Activated T-helper 2 cell treated with anti-CD3 and anti-CD28 coated beads, Interferon-gamma antibody, Interleukin-2, Interleukin-4, amounts not matched to agents 10 μg/mL and 5 μg/mL and 100 μg/mL, durations not matched to agents 14 hours and 24 hours and 36 hours (primary cell): ENCODE measurements at regions of chr12 and their contacts with region 1.

Region 1: GRCh38 chr12:95072900-95073697 is at the start of gene NR2C1:
- DNase-seq: peak; percentile 90
- H3K4me3 Mint-ChIP-seq: peak within 1 kb of the TSS; percentile 91
- H3K27ac Mint-ChIP-seq: peak within 1 kb of the TSS; percentile 85
- H3K4me1 Mint-ChIP-seq: peaks cover 13% of the 10 kb centered on the region
- H3K27me3 Mint-ChIP-seq: peaks cover 5% of the 10 kb centered on the region
- total RNA-seq, gene NR2C1: 28.5 and 30.0 TPM in 2 replicates

Region 2: DNA sequence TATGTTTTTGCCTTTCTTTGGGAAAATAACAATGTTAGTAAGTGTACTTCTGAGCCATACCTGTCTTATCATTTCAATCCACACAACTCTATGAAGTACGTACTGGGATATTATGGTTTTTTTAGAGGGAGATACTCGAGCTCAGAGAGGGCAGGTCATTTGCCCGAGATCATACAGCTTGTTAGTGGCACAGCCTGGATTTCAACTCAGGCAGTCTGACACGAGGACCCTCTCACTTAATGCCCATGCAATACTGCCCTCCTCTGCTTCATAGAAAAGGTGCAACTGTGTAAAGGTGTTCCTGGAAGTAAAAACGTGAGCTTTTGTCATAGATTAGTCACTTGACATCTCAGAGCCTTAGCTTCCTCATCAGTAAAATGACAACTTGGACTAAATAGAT is 197.6 kb before region 1 on chr12:
- intact Hi-C with region 1: loop called (anchors 10 kb)
- DNase-seq: no peak
- H3K4me3 Mint-ChIP-seq: no peak overlapping the region
- H3K27ac Mint-ChIP-seq: no peak overlapping the region
- H3K4me1 Mint-ChIP-seq: peaks cover 2% of the 10 kb centered on the region
- H3K27me3 Mint-ChIP-seq: peaks cover 45% of the 10 kb centered on the region

Region 3: GRCh38 chr12:95003213-95003920 is 69.7 kb before region 1 on chr12 and contains the start of gene NDUFA12:
- intact Hi-C with region 1: loop called (anchors 2 kb)
- DNase-seq: peak; percentile 92
- H3K4me3 Mint-ChIP-seq: peak within 1 kb of the TSS; percentile 90
- H3K27ac Mint-ChIP-seq: peak within 1 kb of the TSS; percentile 84
- H3K4me1 Mint-ChIP-seq: peaks cover 27% of the 10 kb centered on the region
- H3K27me3 Mint-ChIP-seq: no peaks in the 10 kb centered on the region
- total RNA-seq, gene NDUFA12: 117 and 118 TPM in 2 replicates

Region 4: DNA sequence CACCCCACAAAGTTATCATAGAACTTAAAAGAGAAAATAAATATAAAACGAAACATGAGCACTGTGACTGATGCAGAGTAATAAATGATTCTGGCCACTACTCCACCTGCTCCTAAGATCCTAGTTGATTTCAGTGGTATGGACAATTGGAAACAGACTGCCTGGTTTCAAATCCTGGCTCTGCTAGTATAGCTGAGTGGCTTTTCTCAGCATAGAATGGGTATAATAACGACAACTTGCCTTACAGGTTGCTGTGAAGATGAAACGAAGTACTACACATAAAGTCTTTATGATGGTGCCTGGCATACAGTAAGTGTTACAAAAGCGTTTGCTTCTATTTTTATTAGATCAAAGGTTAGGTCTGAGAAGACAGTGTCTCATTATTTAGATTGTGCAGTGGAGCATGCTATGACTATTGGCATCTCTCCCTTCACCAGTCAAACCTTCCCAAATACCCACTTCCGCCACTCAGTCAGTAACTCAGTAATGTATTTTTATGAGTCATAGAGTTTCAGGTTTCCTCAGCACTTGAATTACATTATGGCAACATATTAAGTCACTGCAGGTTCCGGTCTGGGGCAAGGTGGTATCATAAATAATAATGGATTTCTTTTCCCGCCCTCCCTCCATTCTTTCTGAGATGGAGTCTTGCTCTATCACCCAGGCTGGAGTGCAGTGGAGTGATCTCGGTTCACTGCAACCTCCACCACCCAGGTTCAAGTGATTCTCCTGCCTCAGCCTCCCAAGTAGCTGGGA is 30.0 kb after region 1 on chr12:
- intact Hi-C with region 1: loop called (anchors 1 kb)
- DNase-seq: peak; percentile 29
- H3K4me3 Mint-ChIP-seq: no peak overlapping the region
- H3K27ac Mint-ChIP-seq: peak overlapping the region; percentile 48
- H3K4me1 Mint-ChIP-seq: peaks cover 8% of the 10 kb centered on the region
- H3K27me3 Mint-ChIP-seq: peaks cover 2% of the 10 kb centered on the region

Region 5: DNA sequence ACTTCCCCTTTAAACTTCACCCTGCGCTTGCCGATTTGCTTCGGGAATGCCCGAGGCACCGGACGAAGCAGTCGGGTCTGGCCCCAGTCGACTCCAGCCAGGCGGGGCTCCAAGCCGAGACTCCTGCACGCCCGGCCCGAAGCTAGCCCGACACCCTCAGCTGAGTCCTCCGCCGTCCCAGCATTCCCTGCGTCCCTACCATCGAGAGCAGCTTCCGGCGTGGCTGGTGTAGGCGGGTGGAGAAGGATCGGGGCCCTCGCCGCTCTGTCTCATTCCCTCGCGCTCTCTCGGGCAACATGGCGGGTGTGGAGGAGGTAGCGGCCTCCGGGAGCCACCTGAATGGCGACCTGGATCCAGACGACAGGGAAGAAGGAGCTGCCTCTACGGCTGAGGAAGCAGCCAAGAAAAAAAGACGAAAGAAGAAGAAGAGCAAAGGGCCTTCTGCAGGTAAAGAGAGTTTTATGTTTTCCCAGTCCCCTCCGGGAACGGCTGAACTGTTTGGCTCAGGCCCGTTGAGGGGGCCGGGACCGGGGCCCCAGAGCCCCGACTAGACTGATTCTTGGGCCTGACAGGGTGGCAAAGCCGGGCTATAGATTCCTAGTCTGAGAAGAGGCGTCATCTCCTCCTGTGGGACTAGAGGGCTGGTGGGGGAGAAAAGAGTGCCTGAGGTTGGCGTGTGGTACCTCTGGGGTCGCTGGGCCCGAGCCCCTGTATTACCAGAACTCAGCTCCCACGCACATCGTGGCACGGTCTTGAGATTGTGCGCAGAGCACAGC is 401.0 kb after region 1 on chr12 and contains the start of gene METAP2:
- intact Hi-C with region 1: loop called (anchors 2 kb)
- DNase-seq: peak; percentile 87
- H3K4me3 Mint-ChIP-seq: peak within 1 kb of the TSS; percentile 100
- H3K27ac Mint-ChIP-seq: peak within 1 kb of the TSS; percentile 99
- H3K4me1 Mint-ChIP-seq: peaks cover 29% of the 10 kb centered on the region
- H3K27me3 Mint-ChIP-seq: no peaks in the 10 kb centered on the region
- total RNA-seq, gene METAP2: 111 and 113 TPM in 2 replicates